Activated CD8-positive, alpha-beta T cell treated with anti-CD3 and anti-CD28 coated beads, Interleukin-2, amount 10 ng/mL, durations not matched to agents 7 days and 5 days (primary cell): ENCODE measurements at regions of chr3 and their contacts with region 1.

Region 1: GRCh38 chr3:132352541-132353143 is 35.4 kb downstream of the ACP3 start:
- DNase-seq: peak; percentile 77
- ATAC-seq: peak; percentile 82
- H3K4me3 Mint-ChIP-seq: no peak overlapping the region
- H3K27ac Mint-ChIP-seq: no peak overlapping the region
- H3K4me1 Mint-ChIP-seq: no peaks in the 10 kb centered on the region
- H3K27me3 Mint-ChIP-seq: peaks cover 14% of the 10 kb centered on the region

Region 2: GRCh38 chr3:132399054-132399929 is 46.6 kb after region 1 on chr3:
- CTCF ChIA-PET with region 1: interaction called, 49 read pairs
- POLR2A ChIA-PET with region 1: no interaction called
- DNase-seq: peak; percentile 39
- ATAC-seq: no peak
- H3K4me3 Mint-ChIP-seq: no peak overlapping the region
- H3K27ac Mint-ChIP-seq: no peak overlapping the region
- H3K4me1 Mint-ChIP-seq: no peaks in the 10 kb centered on the region
- H3K27me3 Mint-ChIP-seq: peaks cover 12% of the 10 kb centered on the region